Heart left ventricle (tissue), 16 donors: ENCODE measurements at regions of chr11 and their contacts with region 1.

Region 1: GRCh38 chr11:124415356-124415923 is 9.2 kb downstream of the OR8B4 start:
- DNase-seq: no peak
- ATAC-seq: no peak
- H3K4me3 ChIP-seq: no peak overlapping the region
- H3K27ac ChIP-seq: no peak overlapping the region
- H3K4me1 ChIP-seq: no peaks in the 10 kb centered on the region
- H3K27me3 ChIP-seq: peaks cover 0 to 26% (median 0%) of the 10 kb centered on the region in 9 donors
- CTCF ChIP-seq: peak; percentile 52 to 84 (median 69)
- POLR2A ChIP-seq: no peak

Region 2: DNA sequence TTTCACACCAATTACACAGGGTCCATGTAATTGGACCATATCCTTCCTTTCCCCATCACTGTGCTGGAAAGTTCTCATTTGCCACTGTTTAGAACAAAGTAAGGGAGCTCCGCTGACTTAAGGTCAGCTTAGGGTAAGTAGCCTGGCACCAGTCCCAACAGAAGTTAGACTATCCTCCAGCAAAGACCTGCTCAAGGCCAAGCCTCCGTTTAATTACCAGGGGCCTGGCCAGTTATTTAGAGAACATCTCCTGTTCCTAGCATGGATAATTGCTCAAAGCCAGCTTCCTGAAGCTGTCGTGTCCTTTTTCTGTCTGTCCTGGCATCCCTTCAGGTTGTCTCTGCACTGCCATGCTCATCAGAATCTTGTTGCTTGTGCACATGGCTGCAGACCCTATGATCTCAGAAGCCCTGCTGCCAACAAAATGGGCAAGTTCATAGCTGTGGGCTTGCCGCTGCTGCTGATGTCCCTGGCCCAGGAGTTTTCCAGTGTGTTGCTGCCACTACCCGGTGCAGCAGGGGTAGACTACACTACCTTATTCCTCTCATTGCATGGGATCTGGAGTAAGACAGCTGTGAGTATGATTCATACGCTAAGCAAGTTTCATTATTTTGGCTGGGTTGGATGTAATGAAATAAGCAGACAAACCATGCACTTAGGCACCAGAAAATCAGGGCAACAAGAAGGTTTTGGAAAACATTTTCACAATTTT is 162.4 kb after region 1 on chr11:
- intact Hi-C with region 1: loop called in 2 of 10 experiments (anchors 5 kb)
- DNase-seq: peak in 1 of 5 donors; percentile 30
- ATAC-seq: peak in 3 of 4 donors; percentile 20 to 95 (median 26)
- H3K4me3 ChIP-seq: no peak overlapping the region
- H3K27ac ChIP-seq: no peak overlapping the region
- H3K4me1 ChIP-seq: peaks cover 0 to 5% (median 0%) of the 10 kb centered on the region in 12 donors
- H3K27me3 ChIP-seq: no peaks in the 10 kb centered on the region
- CTCF ChIP-seq: no peak
- POLR2A ChIP-seq: no peak

Region 3: GRCh38 chr11:124591430-124591829 is 176.0 kb after region 1 on chr11:
- intact Hi-C with region 1: loop called in 8 of 10 experiments (anchors 1 to 5 kb)
- DNase-seq: no peak
- ATAC-seq: no peak
- H3K4me3 ChIP-seq: no peak overlapping the region
- H3K27ac ChIP-seq: no peak overlapping the region
- H3K4me1 ChIP-seq: no peaks in the 10 kb centered on the region
- H3K27me3 ChIP-seq: peaks cover 0 to 20% (median 0%) of the 10 kb centered on the region in 9 donors
- CTCF ChIP-seq: no peak
- POLR2A ChIP-seq: no peak